ENCODE measurements at regions of chr7 and their contacts with region 1.

Region 1: GRCh38 chr7:76173364-76174205 is 28.1 kb upstream of the SRRM3 start:
- DNase-seq: no peak
- H3K4me3 ChIP-seq: no peak overlapping the region
- H3K27ac ChIP-seq: no peak overlapping the region
- H3K4me1 ChIP-seq: peaks cover 0 to 8% (median 7%) of the 10 kb centered on the region in 4 donors
- H3K27me3 ChIP-seq: no peaks in the 10 kb centered on the region
- CTCF ChIP-seq: no peak
- EP300 ChIP-seq: no peak
- POLR2A ChIP-seq: no peak

Region 2: GRCh38 chr7:76314042-76314721 is 140.6 kb after region 1 on chr7:
- intact Hi-C with region 1: loop called (anchors 5 kb)
- DNase-seq: peak; percentile 98
- H3K4me3 ChIP-seq: no peak overlapping the region
- H3K27ac ChIP-seq: peak overlapping the region in 1 of 5 donors; percentile 48
- H3K4me1 ChIP-seq: peaks cover 11 to 33% (median 23%) of the 10 kb centered on the region in 4 donors
- H3K27me3 ChIP-seq: no peaks in the 10 kb centered on the region
- CTCF ChIP-seq: peak in 6 of 7 experiments; percentile 95 to 100 (median 99)
- EP300 ChIP-seq: no peak
- POLR2A ChIP-seq: no peak

Measured in stomach (tissue), 19 donors.